ENCODE measurements at regions of chr13 and their contacts with region 1.

Region 1: GRCh38 chr13:102596147-102597028 is at the start of gene TPP2:
- DNase-seq: peak; percentile 99 to 100
- H3K4me3 ChIP-seq: peak within 1 kb of the TSS; percentile 90 to 99 (median 98)
- H3K27ac ChIP-seq: peak within 1 kb of the TSS; percentile 98 to 99
- H3K4me1 ChIP-seq: peaks cover 0 to 5% of the 10 kb centered on the region in 2 donors
- H3K27me3 ChIP-seq: no peaks in the 10 kb centered on the region
- CTCF ChIP-seq: no peak
- POLR2A ChIP-seq: peak; percentile 75
- total RNA-seq, gene TPP2: 50.2 to 62.9 (median 51.8) TPM

Region 2: GRCh38 chr13:102845630-102846260 is 249.4 kb after region 1 on chr13 and contains the start of gene ERCC5:
- intact Hi-C with region 1: loop called (anchors 10 kb)
- DNase-seq: peak; percentile 89 to 90
- H3K4me3 ChIP-seq: peak within 1 kb of the TSS; percentile 76 to 95 (median 83)
- H3K27ac ChIP-seq: peak within 1 kb of the TSS; percentile 97 to 99
- H3K4me1 ChIP-seq: peaks cover 0 to 2% of the 10 kb centered on the region in 2 donors
- H3K27me3 ChIP-seq: no peaks in the 10 kb centered on the region
- CTCF ChIP-seq: peak in 1 of 3 donors; percentile 8
- POLR2A ChIP-seq: peak; percentile 61
- total RNA-seq, gene ERCC5: 76.0 to 85.0 (median 77.6) TPM

Measured in breast epithelium (tissue), 4 donors.